GM12878 (cell line): ENCODE measurements at regions of chr2 and their contacts with region 1.

Region 1: DNA sequence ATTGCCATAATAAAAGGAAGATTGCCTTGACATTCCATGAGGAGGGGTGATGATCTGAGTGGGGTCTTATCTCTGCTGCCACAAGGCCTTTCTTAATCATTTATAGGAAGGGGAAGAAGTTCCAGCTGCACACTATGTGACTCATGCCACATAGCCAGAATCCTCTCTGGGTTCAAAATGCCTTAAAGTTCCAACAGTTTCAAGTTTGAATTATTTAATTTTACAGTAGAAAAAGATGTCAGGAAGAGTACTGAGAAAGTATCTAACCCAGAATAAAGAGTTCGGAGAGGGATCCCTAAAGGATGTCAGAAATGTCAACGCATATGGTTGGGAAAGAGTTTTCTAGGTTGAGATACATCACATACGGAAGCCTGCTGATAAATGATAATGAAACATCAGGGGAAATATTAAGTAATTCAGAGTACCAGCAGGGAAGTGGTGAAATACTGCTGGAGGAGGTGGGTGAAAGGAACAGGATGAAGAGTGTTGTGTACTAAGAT is 999.9 kb downstream of the TSN start:
- DNase-seq: no peak
- ATAC-seq: no peak
- H3K4me3 ChIP-seq: no peak overlapping the region
- H3K27ac ChIP-seq: no peak overlapping the region
- H3K4me1 ChIP-seq: no peaks in the 10 kb centered on the region
- H3K27me3 ChIP-seq: no peaks in the 10 kb centered on the region
- CTCF ChIP-seq: no peak
- EP300 ChIP-seq: no peak
- POLR2A ChIP-seq: no peak
- RAD21 ChIP-seq: no peak

Region 2: DNA sequence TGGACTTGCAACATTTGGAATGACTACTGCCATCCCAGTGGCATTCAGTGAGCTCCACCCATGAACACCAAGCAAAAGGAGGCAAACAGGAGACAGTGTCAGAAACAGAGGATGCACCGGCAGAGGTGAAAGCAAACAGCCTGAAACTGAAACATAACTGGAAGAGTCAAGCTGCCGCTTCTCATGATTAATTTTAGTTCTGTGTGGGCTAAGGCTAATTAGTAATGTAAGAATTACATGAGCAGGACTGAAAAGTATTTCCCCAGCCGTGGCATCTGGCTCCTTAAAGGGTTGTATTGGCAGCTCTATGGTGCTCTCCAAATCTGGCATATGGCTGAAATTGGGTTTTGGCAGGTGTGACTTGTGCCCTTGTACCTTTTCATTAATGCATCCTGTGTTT is 108.2 kb after region 1 on chr2:
- CTCF ChIA-PET with region 1: no interaction called
- POLR2A ChIA-PET with region 1: interaction called, 3 read pairs
- RAD21 ChIA-PET with region 1: interaction called, 4 read pairs
- SMC1A ChIA-PET with region 1: interaction called, 3 read pairs
- in situ Hi-C with region 1: no loop called
- intact Hi-C with region 1: loop called (anchors 5 kb)
- DNase-seq: peak; percentile 38
- ATAC-seq: peak; percentile 89
- H3K4me3 ChIP-seq: no peak overlapping the region
- H3K27ac ChIP-seq: no peak overlapping the region
- H3K4me1 ChIP-seq: no peaks in the 10 kb centered on the region
- H3K27me3 ChIP-seq: no peaks in the 10 kb centered on the region
- CTCF ChIP-seq: no peak
- EP300 ChIP-seq: peak; percentile 40 to 48; a peak in 1 of 4 replicates
- POLR2A ChIP-seq: no peak
- RAD21 ChIP-seq: no peak

Region 3: GRCh38 chr2:123095219-123095835 is 340.0 kb after region 1 on chr2:
- CTCF ChIA-PET with region 1: interaction called, 3 read pairs
- POLR2A ChIA-PET with region 1: no interaction called
- RAD21 ChIA-PET with region 1: no interaction called
- SMC1A ChIA-PET with region 1: no interaction called
- in situ Hi-C with region 1: no loop called
- intact Hi-C with region 1: loop called (anchors 10 kb)
- DNase-seq: no peak
- ATAC-seq: no peak
- H3K4me3 ChIP-seq: no peak overlapping the region
- H3K27ac ChIP-seq: no peak overlapping the region
- H3K4me1 ChIP-seq: no peaks in the 10 kb centered on the region
- H3K27me3 ChIP-seq: no peaks in the 10 kb centered on the region
- CTCF ChIP-seq: no peak
- EP300 ChIP-seq: no peak
- POLR2A ChIP-seq: no peak
- RAD21 ChIP-seq: no peak

Region 4: DNA sequence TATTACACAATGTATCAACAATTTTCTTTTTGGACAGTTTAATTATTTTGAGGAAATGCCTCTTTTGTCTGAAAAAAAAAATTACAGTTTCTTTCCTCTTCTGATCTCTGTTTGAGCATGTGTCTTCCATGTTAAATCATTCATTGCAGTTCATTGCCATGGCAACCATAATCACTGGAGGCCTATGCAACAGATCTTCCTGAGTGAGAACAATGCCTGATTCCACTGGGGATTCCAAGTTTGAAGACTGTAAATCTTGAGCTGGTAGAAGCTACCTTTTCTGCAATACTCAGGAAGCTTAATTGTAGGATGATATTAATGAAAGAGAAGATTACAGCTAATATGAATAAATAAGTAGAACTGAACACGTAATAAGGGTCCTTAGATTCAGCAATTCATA is 548.4 kb after region 1 on chr2:
- CTCF ChIA-PET with region 1: no interaction called
- POLR2A ChIA-PET with region 1: no interaction called
- RAD21 ChIA-PET with region 1: interaction called, 3 read pairs
- SMC1A ChIA-PET with region 1: no interaction called
- in situ Hi-C with region 1: no loop called
- intact Hi-C with region 1: loop called (anchors 10 kb)
- DNase-seq: no peak
- ATAC-seq: no peak
- H3K4me3 ChIP-seq: no peak overlapping the region
- H3K27ac ChIP-seq: no peak overlapping the region
- H3K4me1 ChIP-seq: no peaks in the 10 kb centered on the region
- H3K27me3 ChIP-seq: no peaks in the 10 kb centered on the region
- CTCF ChIP-seq: no peak
- EP300 ChIP-seq: no peak
- POLR2A ChIP-seq: no peak
- RAD21 ChIP-seq: no peak

Region 5: DNA sequence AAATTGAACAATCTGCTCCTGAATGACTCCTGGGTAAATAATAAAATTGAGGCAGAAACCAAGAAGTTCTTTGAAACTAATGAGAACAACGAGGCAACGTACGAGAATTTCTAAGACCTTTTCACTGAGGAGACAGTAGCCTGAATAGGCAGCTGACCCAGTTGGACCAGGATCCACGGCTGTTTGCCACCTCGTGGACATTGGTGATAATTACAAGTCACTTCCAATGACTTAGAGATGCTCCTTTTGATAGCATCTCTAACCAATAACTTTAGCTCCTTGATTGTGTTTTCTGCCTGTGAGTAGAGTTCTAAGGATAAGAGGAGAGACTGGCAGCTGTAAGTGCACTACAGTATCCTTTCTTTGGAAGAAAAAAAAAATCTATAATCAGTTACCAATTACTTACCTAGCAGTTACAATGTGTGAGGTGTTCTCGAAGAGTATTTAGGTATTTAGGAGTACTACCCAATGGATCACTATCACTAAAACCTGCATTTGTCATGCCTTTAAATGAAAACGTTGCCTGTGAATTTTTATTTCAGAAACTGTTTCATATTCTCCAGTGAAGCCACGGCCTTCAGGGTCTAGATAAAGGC is 1238.5 kb after region 1 on chr2:
- CTCF ChIA-PET with region 1: no interaction called
- POLR2A ChIA-PET with region 1: no interaction called
- RAD21 ChIA-PET with region 1: no interaction called
- SMC1A ChIA-PET with region 1: no interaction called
- in situ Hi-C with region 1: no loop called
- intact Hi-C with region 1: loop called (anchors 10 kb)
- DNase-seq: no peak
- ATAC-seq: peak; percentile 86
- H3K4me3 ChIP-seq: no peak overlapping the region
- H3K27ac ChIP-seq: no peak overlapping the region
- H3K4me1 ChIP-seq: no peaks in the 10 kb centered on the region
- H3K27me3 ChIP-seq: no peaks in the 10 kb centered on the region
- CTCF ChIP-seq: peak; percentile 40 to 52 (median 41); a peak in 5 of 6 replicates
- EP300 ChIP-seq: no peak
- POLR2A ChIP-seq: no peak
- RAD21 ChIP-seq: peak; percentile 51